ENCODE measurements at regions of chr6 and their contacts with region 1.

Region 1: GRCh38 chr6:149431905-149432775 is 32.1 kb downstream of the SUMO4 start:
- H3K4me3 Mint-ChIP-seq: no peak overlapping the region
- H3K27ac Mint-ChIP-seq: no peak overlapping the region
- H3K4me1 Mint-ChIP-seq: peaks cover 15% of the 10 kb centered on the region
- H3K27me3 Mint-ChIP-seq: no peaks in the 10 kb centered on the region

Region 2: GRCh38 chr6:149190224-149190831 is 241.8 kb before region 1 on chr6:
- intact Hi-C with region 1: loop called (anchors 5 kb)
- H3K4me3 Mint-ChIP-seq: no peak overlapping the region
- H3K27ac Mint-ChIP-seq: no peak overlapping the region
- H3K4me1 Mint-ChIP-seq: no peaks in the 10 kb centered on the region
- H3K27me3 Mint-ChIP-seq: no peaks in the 10 kb centered on the region

Region 3: GRCh38 chr6:149389509-149390297 is 42.4 kb before region 1 on chr6:
- intact Hi-C with region 1: no loop called
- H3K4me3 Mint-ChIP-seq: no peak overlapping the region
- H3K27ac Mint-ChIP-seq: no peak overlapping the region
- H3K4me1 Mint-ChIP-seq: peaks cover 17% of the 10 kb centered on the region
- H3K27me3 Mint-ChIP-seq: no peaks in the 10 kb centered on the region